Tibial artery (tissue), 4 donors: ENCODE measurements at regions of chr1 and their contacts with region 1.

Region 1: DNA sequence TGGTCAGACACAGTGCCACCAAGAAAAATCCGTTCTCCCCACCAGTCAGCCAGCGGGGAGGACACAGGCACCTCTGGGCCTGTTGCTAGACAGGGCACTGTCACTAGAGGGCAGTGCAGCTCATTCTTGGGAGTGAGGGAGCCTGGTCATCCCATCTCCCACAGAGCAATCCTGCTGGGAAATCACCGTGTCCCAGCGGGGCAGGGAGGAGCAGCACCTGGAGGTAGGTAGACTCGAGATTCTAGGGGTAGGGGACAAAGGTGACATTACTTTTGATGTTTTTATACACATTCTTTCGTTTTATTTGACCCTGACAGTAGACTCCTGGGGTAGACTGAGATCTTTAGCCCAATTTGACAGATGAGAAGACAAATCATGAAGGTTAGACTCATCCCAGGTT is 6.7 kb upstream of the CAMK1G start:
- DNase-seq: peak; percentile 73 to 75
- H3K4me3 ChIP-seq: no peak overlapping the region
- H3K27ac ChIP-seq: no peak overlapping the region
- H3K4me1 ChIP-seq: no peaks in the 10 kb centered on the region
- H3K27me3 ChIP-seq: peaks cover 0 to 29% of the 10 kb centered on the region in 2 donors
- CTCF ChIP-seq: peak; percentile 80 to 92

Region 2: DNA sequence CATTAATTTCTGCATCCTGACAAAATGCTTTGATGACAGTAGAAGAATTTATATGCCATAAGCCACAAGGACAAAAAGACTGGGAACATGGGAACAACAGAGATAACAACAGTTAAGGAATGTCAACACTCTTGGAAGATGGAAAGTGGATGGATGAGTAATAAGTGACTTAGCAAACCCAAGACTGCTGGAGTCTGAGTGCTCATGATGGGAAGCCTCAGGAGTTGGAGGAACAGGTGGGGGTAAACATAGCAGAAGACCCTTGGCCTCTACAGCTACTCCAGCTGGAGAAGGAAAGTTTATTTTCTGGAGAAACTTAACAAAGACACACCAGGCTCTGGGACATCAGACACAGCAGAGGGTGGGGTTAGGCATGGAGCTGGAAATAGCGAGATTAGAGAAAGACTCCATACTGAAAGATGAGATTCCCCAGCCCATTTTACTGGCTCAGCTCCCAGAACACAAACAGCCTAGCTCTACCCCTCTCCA is 112.0 kb after region 1 on chr1:
- intact Hi-C with region 1: loop called (anchors 2 kb)
- DNase-seq: no peak
- H3K4me3 ChIP-seq: no peak overlapping the region
- H3K27ac ChIP-seq: no peak overlapping the region
- H3K4me1 ChIP-seq: no peaks in the 10 kb centered on the region
- H3K27me3 ChIP-seq: peaks cover 0 to under 1% of the 10 kb centered on the region in 2 donors
- CTCF ChIP-seq: no peak

Region 3: GRCh38 chr1:209747580-209748262 is 170.9 kb after region 1 on chr1:
- intact Hi-C with region 1: loop called (anchors 10 kb)
- DNase-seq: peak; percentile 88 to 92
- H3K4me3 ChIP-seq: peak overlapping the region; percentile 25 to 44
- H3K27ac ChIP-seq: peak overlapping the region in 1 of 2 donors; percentile 0
- H3K4me1 ChIP-seq: peaks cover 0 to 13% (median 8%) of the 10 kb centered on the region in 4 donors
- H3K27me3 ChIP-seq: no peaks in the 10 kb centered on the region
- CTCF ChIP-seq: peak; percentile 84 to 93